ENCODE measurements at regions of chr17 and their contacts with region 1.

Region 1: GRCh38 chr17:54013072-54013471 is 190.3 kb downstream of the KIF2B start:
- DNase-seq: no peak
- H3K4me3 ChIP-seq: no peak overlapping the region
- H3K27ac ChIP-seq: no peak overlapping the region
- H3K4me1 ChIP-seq: no peaks in the 10 kb centered on the region
- H3K27me3 ChIP-seq: no peaks in the 10 kb centered on the region
- CTCF ChIP-seq: no peak
- POLR2A ChIP-seq: no peak

Region 2: GRCh38 chr17:53950207-53950857 is 62.7 kb before region 1 on chr17:
- intact Hi-C with region 1: loop called (anchors 10 kb)
- DNase-seq: no peak
- H3K4me3 ChIP-seq: no peak overlapping the region
- H3K27ac ChIP-seq: no peak overlapping the region
- H3K4me1 ChIP-seq: no peaks in the 10 kb centered on the region
- H3K27me3 ChIP-seq: no peaks in the 10 kb centered on the region
- CTCF ChIP-seq: no peak
- POLR2A ChIP-seq: no peak